ENCODE measurements at regions of chr4 and their contacts with region 1.

Region 1: GRCh38 chr4:181528570-181529184 is 714.5 kb upstream of the TENM3 start:
- DNase-seq: no peak
- ATAC-seq: peak; percentile 76

Region 2: GRCh38 chr4:181143250-181143854 is 385.3 kb before region 1 on chr4:
- intact Hi-C with region 1: loop called (anchors 1 kb)
- DNase-seq: no peak
- ATAC-seq: no peak

Region 3: GRCh38 chr4:181261279-181261678 is 267.4 kb before region 1 on chr4:
- intact Hi-C with region 1: loop called (anchors 1 kb)
- DNase-seq: no peak
- ATAC-seq: no peak

Region 4: DNA sequence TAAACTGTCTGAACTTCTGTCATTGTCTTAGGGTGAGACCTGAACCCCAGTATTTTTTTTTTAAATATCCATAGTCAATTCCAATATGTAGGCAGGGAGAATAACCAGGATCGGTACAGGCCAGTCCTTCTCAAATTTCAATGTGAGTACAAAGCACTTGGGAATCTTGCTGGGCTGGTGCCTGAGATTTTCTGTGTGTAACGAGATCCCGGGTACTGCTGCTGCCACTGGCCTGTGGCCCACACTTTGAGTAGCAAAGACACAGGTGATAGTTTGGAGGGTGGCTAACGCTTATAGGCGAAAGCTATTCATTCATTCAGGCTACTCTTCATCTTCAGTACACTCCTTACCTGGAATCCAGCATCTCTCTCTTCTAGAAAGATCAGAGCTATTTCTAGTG is 209.0 kb before region 1 on chr4:
- intact Hi-C with region 1: loop called (anchors 5 kb)
- DNase-seq: no peak
- ATAC-seq: peak; percentile 42

Region 5: DNA sequence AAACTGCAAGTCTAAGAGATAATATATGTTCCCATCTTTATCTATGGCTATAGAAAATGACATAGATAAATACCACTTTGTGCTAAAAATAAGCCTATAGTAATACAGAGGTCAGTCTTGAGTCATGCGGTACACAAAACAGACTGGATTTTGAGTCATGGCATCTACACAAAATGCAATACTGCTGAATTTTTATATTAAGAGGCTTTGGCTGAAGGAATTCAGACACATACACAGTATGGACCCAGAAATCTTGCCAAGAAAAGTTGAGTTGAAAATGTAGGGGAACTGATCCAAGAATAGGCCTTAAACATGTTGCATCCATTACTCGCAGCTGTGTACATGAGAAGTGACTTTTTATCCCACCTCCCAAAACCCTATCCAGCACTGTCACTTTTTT is 898.9 kb after region 1 on chr4:
- intact Hi-C with region 1: no loop called
- DNase-seq: no peak
- ATAC-seq: no peak